Ovary (tissue), 10 donors: ENCODE measurements at regions of chr15 and their contacts with region 1.

Region 1: GRCh38 chr15:45457641-45458433 is 64.7 kb downstream of the SLC30A4 start:
- DNase-seq: peak; percentile 55 to 75 (median 57)
- H3K4me3 ChIP-seq: peak overlapping the region; percentile 39
- H3K27ac ChIP-seq: peak overlapping the region; percentile 15 to 71
- H3K4me1 ChIP-seq: no peaks in the 10 kb centered on the region
- H3K27me3 ChIP-seq: no peaks in the 10 kb centered on the region
- CTCF ChIP-seq: peak; percentile 71 to 76 (median 72)
- EP300 ChIP-seq: no peak
- POLR2A ChIP-seq: no peak

Region 2: DNA sequence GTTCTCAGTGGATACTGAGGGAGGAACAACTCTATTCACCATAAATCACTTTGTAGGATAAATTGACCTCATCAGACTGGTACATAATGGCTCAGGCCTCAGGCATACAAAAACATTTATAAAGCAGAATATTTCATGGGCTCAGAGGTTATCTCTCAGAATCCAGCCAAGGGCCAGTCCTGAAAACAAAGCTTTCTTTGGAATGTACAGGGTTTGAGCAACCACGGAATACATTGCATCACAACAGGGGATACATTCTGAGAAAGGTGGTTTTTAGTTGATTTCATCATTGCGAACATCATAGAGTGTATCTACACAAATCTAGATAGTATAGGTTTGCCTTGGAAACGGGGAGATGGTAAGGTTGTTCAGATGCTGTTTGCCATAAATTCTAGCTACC is 1063.8 kb before region 1 on chr15:
- intact Hi-C with region 1: no loop called
- DNase-seq: no peak
- H3K4me3 ChIP-seq: no peak overlapping the region
- H3K27ac ChIP-seq: no peak overlapping the region
- H3K4me1 ChIP-seq: no peaks in the 10 kb centered on the region
- H3K27me3 ChIP-seq: no peaks in the 10 kb centered on the region
- CTCF ChIP-seq: no peak
- EP300 ChIP-seq: no peak
- POLR2A ChIP-seq: no peak

Region 3: DNA sequence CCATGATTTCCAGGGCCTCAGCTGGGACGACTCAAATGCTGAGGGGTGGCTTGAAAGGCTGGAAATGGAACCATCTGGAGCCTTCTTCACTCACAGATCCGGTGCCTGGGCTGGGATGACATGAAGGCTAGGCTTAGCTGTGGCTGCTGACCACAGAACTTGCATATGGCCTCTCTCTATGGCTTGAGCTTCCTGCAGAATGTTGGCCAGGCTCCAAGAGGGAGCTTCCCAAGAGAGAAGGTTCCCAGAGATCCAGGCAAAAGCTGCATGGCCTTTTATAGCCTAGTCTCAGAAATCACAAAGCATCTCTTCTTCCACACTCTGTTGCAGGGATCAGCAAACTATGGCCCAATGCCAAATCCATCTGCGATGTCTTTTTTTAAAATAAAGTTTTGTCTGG is 124.3 kb before region 1 on chr15:
- intact Hi-C with region 1: no loop called
- DNase-seq: peak; percentile 39 to 68 (median 52)
- H3K4me3 ChIP-seq: no peak overlapping the region
- H3K27ac ChIP-seq: no peak overlapping the region
- H3K4me1 ChIP-seq: peaks cover 7% of the 10 kb centered on the region
- H3K27me3 ChIP-seq: no peaks in the 10 kb centered on the region
- CTCF ChIP-seq: no peak
- EP300 ChIP-seq: no peak
- POLR2A ChIP-seq: no peak

Region 4: DNA sequence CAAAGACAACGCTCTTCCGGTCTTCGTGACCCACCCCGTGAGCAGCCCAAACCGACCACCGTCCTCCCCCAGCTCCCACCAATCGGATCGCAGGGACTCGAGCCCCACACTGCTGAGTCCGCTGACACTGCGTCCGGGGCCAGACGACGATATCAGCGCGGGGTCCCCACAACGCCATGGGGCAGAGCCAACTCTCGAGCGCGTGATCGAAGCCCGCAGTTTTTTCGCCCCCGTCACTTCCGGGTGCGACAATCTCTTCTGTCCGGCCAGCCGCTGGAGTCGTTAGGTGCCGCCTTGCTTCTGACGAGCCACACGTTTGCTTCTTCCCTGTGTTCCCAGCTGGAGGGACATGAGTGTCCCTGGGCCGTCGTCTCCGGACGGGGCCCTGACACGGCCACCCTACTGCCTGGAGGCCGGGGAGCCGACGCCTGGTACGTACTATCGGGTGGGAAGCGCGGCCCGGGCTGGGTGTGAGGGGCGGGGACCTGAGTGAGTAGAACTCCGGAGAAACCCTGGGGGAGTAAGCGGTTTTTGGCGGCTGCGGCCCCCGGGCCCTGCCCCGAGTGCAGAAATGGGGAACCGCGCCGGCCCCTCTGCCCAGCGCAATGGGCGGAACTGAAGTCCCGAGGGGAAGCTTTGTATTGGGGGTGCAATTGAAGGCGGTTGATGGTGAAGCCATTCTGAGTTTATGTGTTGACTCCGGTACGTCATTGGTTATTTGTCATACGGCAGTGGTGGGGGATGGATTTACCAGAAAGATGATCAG is 129.4 kb after region 1 on chr15 and contains the start of gene BLOC1S6:
- intact Hi-C with region 1: no loop called
- DNase-seq: peak; percentile 91 to 95 (median 92)
- H3K4me3 ChIP-seq: peak within 1 kb of the TSS; percentile 64
- H3K27ac ChIP-seq: peak within 1 kb of the TSS; percentile 97 to 98
- H3K4me1 ChIP-seq: peaks cover 7% of the 10 kb centered on the region
- H3K27me3 ChIP-seq: no peaks in the 10 kb centered on the region
- CTCF ChIP-seq: peak in 1 of 3 donors; percentile 12
- EP300 ChIP-seq: peak; percentile 25
- POLR2A ChIP-seq: peak; percentile 67
- total RNA-seq, gene BLOC1S6: 34.1 to 58.3 (median 46.1) TPM

Region 5: DNA sequence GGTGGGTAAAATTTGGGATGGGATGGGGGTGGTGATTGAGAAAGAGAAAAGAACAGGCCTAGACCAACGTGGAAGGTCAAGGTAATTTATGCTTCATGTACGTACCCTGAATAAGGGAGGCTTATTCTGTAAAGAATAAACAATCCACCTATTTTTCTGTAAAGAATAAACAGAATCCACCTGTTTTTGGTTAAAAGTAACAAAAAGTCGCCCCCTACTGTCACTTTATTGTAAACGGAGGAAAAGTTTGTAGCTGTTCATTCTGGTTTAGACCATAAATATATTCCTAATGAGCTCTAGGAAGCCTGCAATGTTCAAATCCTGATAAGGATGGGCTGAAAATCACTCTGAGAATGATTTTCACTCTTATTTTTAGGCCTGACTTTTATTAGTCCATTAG is 153.5 kb after region 1 on chr15:
- intact Hi-C with region 1: loop called in 1 of 4 experiments (anchors 5 kb)
- DNase-seq: no peak
- H3K4me3 ChIP-seq: no peak overlapping the region
- H3K27ac ChIP-seq: no peak overlapping the region
- H3K4me1 ChIP-seq: no peaks in the 10 kb centered on the region
- H3K27me3 ChIP-seq: no peaks in the 10 kb centered on the region
- CTCF ChIP-seq: no peak
- EP300 ChIP-seq: no peak
- POLR2A ChIP-seq: no peak